Activated CD4-positive, alpha-beta T cell treated with anti-CD3 and anti-CD28 coated beads for 36 hours (primary cell): ENCODE measurements at regions of chr6 and their contacts with region 1.

Region 1: DNA sequence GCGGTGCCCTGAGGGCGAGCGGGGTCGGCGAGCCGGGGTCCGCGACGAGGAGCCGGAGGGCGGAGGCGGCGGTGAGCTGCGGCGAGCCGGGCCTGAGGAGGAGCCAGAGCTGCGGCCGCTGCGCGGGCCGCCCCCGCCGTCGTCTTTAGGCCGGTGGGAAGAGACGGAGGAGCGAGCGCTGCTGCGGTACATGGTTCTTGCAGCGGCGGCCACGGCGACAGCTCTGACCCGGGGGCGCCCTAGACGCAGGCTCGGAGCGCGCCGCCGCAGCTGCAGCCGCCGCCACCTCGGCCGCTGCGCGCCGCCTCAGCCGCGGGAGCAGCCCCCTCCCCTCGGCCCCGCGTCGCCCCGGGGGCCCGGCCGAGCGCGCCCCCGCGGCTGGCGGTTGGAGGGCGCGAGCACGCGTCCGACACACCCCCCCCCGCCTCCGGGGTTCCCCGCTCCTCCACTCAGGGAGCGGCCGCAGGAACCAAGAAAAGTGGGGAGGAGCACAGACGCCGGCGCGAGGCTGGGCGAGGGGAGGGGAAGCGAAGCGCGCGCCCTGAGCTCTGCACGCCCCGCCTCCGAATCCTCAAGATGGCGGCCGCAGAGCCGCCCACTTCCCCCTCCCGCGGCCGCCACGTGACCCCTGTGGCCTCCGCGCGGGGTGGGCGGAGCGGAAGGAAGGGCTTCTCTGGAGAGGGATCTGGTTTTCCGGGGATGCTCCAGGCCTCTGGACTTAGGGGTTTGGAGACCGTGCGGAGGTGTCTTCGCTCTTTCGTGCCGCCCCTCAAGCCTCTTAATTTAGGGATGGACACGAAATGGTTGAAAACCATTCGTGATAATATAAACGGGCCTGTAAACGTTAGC is at the start of gene ZNF318:
- DNase-seq: peak; percentile 97
- ATAC-seq: peak; percentile 97
- H3K4me3 Mint-ChIP-seq: peak within 1 kb of the TSS; percentile 86
- H3K27ac Mint-ChIP-seq: peak within 1 kb of the TSS; percentile 95
- H3K4me1 Mint-ChIP-seq: peaks cover 37% of the 10 kb centered on the region
- H3K27me3 Mint-ChIP-seq: no peaks in the 10 kb centered on the region
- total RNA-seq, gene ZNF318: 11.2 to 12.9 TPM

Region 2: GRCh38 chr6:42790549-42791181 is 578.7 kb before region 1 on chr6:
- CTCF ChIA-PET with region 1: no interaction called
- POLR2A ChIA-PET with region 1: no interaction called
- intact Hi-C with region 1: no loop called
- DNase-seq: no peak
- ATAC-seq: peak; percentile 56
- H3K4me3 Mint-ChIP-seq: no peak overlapping the region
- H3K27ac Mint-ChIP-seq: peak overlapping the region; percentile 20
- H3K4me1 Mint-ChIP-seq: peaks cover 21% of the 10 kb centered on the region
- H3K27me3 Mint-ChIP-seq: no peaks in the 10 kb centered on the region

Region 3: DNA sequence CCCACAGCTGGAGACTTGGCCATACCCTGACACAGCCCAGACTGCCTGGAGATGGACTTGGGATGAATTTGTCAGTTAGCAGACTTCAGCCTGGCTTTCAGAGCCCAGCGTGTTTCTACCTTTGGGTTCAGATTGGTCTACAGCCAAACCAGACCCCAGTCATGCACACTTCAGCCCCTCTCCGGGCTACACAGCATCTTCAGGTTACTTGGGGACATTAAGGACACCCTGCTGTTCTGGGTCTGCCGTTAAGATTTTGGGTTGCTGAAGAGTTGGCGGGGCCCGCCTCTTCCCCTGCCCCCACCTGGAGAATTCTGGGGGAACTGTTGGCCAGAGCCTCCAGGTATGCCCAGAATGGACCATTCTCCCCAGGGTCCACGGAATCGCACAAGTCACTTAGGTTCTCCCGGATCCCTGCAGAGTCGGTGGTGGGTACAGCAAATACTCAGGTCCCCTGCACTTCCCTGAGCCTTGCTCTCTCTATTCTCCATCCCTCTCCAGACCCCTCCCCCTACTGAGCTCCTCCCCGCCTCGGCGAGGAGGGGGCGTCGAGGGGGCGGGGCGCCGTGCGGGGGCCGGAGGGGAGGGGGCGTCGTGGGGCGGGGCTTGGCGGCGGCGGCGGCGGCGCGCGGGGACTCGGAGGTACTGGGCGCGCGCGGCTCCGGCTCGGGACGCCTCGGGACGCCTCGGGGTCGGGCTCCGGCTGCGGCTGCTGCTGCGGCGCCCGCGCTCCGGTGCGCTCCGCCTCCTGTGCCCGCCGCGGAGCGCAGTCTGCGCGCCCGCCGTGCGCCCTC is 293.5 kb before region 1 on chr6 and contains the start of gene PTK7:
- CTCF ChIA-PET with region 1: no interaction called
- POLR2A ChIA-PET with region 1: no interaction called
- intact Hi-C with region 1: no loop called
- DNase-seq: peak; percentile 71
- ATAC-seq: peak; percentile 85
- H3K4me3 Mint-ChIP-seq: peak within 1 kb of the TSS; percentile 65
- H3K27ac Mint-ChIP-seq: no peak within 1 kb of the TSS
- H3K4me1 Mint-ChIP-seq: peaks cover 7% of the 10 kb centered on the region
- H3K27me3 Mint-ChIP-seq: peaks cover 9% of the 10 kb centered on the region
- total RNA-seq, gene PTK7: 4.1 to 4.6 TPM

Region 4: DNA sequence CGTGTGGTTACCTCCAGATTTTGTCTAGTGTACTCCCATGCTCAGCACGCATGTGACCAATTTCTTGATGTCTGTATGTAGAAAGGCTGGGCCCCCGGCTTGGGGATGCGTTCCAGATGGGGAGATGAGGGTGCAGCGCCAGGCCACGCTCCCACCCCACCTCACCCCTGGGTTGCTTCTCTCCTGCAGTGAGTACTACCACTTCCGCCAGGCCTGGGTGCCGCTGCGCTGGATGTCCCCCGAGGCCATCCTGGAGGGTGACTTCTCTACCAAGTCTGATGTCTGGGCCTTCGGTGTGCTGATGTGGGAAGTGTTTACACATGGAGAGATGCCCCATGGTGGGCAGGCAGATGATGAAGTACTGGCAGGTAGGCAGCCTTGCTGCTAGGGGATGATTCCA is 209.8 kb before region 1 on chr6:
- CTCF ChIA-PET with region 1: no interaction called
- POLR2A ChIA-PET with region 1: no interaction called
- intact Hi-C with region 1: no loop called
- DNase-seq: no peak
- ATAC-seq: no peak
- H3K4me3 Mint-ChIP-seq: no peak overlapping the region
- H3K27ac Mint-ChIP-seq: no peak overlapping the region
- H3K4me1 Mint-ChIP-seq: no peaks in the 10 kb centered on the region
- H3K27me3 Mint-ChIP-seq: no peaks in the 10 kb centered on the region

Region 5: DNA sequence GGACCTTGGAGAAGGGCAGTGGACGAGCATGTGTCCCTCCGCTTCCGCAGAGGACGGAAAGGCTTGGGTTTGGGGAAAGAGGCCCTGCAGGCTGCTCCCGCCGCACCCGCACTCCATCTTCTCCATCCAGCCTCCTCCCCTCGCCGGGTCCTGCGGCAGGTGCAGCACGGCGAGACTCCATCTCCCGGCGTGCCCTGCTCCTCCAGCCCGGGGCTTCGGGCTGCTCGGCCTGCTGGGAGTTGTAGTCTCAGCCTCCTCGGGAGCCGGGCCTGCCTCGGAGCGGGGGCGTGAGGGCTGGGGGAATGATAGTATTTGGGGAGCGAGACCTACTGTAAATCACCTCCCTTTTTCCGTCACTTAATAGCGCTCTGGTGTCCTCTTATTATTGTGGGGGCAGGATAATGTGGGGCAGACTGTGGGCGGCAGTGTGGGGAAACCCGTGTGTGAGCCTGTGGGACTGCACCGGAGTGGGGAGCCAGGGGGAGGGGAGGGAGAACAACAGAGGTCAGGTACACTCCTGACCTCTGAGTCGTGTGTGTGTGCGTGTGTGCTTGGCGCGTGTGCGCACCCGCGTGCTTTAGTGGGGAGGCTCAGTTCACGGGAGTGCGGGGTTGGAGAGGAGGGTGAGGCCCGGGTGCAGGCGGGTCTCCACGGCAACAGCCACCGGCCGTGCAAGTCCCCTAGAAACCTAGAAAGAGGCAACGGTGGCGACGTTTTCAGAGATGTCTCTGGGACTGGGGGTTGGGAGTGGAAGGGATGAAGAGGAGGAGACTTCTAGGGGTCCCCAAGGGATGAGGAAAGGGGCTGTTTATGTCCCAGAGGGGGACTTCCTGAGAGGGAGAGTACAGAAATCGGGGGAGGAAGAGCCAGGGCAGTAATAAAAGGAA is 122.0 kb before region 1 on chr6:
- CTCF ChIA-PET with region 1: no interaction called
- POLR2A ChIA-PET with region 1: no interaction called
- intact Hi-C with region 1: loop called in 1 of 2 experiments (anchors 1 kb)
- DNase-seq: peak; percentile 94
- ATAC-seq: peak; percentile 99
- H3K4me3 Mint-ChIP-seq: peak overlapping the region; percentile 68
- H3K27ac Mint-ChIP-seq: peak overlapping the region; percentile 62
- H3K4me1 Mint-ChIP-seq: peaks cover 25% of the 10 kb centered on the region
- H3K27me3 Mint-ChIP-seq: peaks cover 14% of the 10 kb centered on the region

Region 6: GRCh38 chr6:43386492-43386891 is 17.1 kb after region 1 on chr6:
- CTCF ChIA-PET with region 1: interaction called, 20 read pairs
- POLR2A ChIA-PET with region 1: interaction called, 15 read pairs
- intact Hi-C with region 1: loop called (anchors 1 kb)
- DNase-seq: no peak
- ATAC-seq: no peak
- H3K4me3 Mint-ChIP-seq: no peak overlapping the region
- H3K27ac Mint-ChIP-seq: peak overlapping the region; percentile 6
- H3K4me1 Mint-ChIP-seq: peaks cover 59% of the 10 kb centered on the region
- H3K27me3 Mint-ChIP-seq: peaks cover 2% of the 10 kb centered on the region

Region 7: DNA sequence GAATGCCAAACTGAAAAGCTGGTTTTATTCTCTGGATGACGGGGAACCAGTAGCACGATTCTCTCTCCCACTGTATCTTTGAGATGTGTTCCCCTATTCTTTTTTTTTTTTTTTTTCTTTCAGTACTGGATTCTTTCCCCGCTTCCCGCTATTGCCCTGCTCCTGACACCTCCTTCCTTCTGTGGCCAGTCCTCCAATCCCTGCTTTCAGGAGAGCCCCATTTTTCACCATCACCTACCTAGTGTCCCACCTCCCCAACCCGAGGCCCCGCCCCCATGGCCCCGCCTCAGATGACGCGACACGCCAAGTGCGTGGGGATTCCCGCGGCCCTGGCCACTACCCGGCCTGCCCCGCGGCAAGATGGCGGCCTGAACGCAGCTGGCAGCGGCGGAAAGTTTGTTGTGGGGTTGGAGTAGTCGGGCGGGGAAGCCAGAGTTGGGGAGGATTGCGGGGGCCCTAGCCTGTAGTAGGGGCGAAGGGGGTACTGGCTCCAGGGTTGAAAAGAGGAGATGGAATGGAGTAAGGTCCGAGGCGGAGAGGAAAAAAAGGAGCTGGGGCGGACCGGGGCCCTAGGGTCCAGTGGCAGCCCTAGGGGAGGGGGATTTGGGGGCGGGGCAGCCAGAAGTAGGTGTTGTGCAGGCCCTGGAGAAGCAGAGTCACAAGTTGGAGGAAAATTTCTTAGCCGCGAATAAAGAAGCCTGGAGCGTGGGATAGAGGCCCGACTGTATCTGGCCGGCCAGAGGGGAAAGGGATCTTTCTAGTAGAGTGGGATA is 108.0 kb after region 1 on chr6 and contains the start of gene TJAP1:
- CTCF ChIA-PET with region 1: no interaction called
- POLR2A ChIA-PET with region 1: no interaction called
- intact Hi-C with region 1: loop called in 1 of 2 experiments (anchors 1 kb)
- DNase-seq: peak; percentile 98
- ATAC-seq: peak; percentile 99
- H3K4me3 Mint-ChIP-seq: peak within 1 kb of the TSS; percentile 98
- H3K27ac Mint-ChIP-seq: peak within 1 kb of the TSS; percentile 82
- H3K4me1 Mint-ChIP-seq: peaks cover 38% of the 10 kb centered on the region
- H3K27me3 Mint-ChIP-seq: no peaks in the 10 kb centered on the region
- total RNA-seq, gene TJAP1: 35.6 to 37.2 TPM

Region 8: DNA sequence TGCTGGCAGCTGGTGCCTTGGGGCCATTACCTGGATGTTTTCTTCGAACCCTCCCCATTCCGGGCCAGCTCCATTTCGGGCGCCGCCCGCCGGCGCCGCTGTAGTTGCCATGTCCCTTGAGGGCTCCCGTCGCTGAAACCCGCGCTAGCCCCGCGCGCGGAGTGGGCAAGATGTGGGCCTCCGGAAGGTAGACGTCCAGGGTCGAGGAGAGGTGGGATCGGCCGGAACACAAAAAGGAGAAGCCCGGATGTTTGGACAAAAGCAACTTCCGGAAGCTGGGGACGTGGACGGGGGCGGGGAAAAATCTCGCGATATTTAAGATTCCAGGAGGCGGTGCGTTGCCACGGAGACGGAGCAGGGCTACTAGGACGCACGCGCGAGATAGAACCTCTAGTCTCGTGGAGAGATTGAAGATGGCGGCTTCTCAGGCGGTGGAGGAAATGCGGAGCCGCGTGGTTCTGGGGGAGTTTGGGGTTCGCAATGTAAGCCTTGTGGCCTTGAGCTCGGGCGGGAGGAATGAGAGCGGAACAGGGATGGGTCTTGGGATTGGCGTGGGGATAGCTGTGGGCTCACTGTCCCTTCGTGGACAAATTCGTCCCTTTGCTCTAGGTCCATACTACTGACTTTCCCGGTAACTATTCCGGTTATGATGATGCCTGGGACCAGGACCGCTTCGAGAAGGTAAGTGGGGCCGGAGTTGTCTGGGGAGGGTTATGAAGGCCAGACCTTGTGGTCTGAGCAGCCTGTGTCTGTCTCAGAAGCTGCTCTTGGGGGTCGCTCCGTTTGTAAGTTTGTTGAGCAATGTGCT is 147.5 kb after region 1 on chr6 and contains the starts of genes POLR1C and YIPF3:
- CTCF ChIA-PET with region 1: interaction called, 4 read pairs
- POLR2A ChIA-PET with region 1: no interaction called
- intact Hi-C with region 1: loop called in 1 of 2 experiments (anchors 1 kb)
- DNase-seq: peak; percentile 98
- ATAC-seq: peak; percentile 93
- H3K4me3 Mint-ChIP-seq: no peak within 1 kb of the TSS
- H3K27ac Mint-ChIP-seq: no peak within 1 kb of the TSS
- H3K4me1 Mint-ChIP-seq: peaks cover 32% of the 10 kb centered on the region
- H3K27me3 Mint-ChIP-seq: no peaks in the 10 kb centered on the region
- total RNA-seq, gene POLR1C: 43.4 to 52.9 TPM
- total RNA-seq, gene YIPF3: 38.0 to 39.6 TPM

Region 9: DNA sequence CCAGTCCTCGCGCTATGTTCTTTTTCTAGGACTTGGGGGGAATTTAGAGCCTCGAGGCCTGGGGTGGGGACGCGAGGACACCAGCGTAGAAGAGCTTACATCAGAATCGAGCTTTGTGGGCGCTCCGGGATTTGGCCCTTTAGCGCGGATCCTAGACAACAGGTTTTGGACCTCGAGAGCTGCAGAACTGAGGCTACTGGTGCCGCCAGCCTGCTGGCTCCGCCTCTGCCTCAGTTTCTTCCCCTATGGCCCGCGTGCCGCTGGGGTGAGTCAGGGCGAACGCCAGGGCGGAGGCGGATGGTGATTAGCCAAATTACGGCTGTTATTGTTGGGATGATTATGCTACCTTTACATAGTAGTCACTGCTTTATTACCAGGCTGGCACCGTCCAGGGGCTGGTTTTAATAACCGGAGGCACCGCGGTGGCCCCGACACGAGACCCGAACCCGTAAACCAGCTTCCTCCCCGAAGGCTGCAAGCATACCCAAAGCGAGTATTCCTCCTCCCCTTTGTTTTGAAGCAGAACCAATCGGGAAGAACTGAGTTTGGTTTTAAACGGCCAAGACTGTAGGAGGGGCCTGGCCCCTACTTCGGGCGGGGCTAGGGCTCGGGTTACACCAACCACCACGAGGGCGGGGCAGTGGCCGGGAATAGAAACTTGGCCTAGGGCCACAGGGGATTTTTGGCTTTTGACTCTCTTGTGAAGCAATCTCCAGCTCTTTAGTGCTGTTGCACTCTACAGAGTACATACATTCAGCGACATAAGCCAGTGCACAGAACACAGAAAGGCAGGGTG is 260.3 kb after region 1 on chr6:
- CTCF ChIA-PET with region 1: no interaction called
- POLR2A ChIA-PET with region 1: interaction called, 4 read pairs
- intact Hi-C with region 1: loop called in 1 of 2 experiments (anchors 1 kb)
- DNase-seq: peak; percentile 96
- ATAC-seq: peak; percentile 77
- H3K4me3 Mint-ChIP-seq: peak overlapping the region; percentile 88
- H3K27ac Mint-ChIP-seq: peak overlapping the region; percentile 100
- H3K4me1 Mint-ChIP-seq: peaks cover 33% of the 10 kb centered on the region
- H3K27me3 Mint-ChIP-seq: no peaks in the 10 kb centered on the region